Activated B cell treated with CpG ODN at 0.5 μM for 24 hours (primary cell): ENCODE measurements at regions of chr20 and their contacts with region 1.

Region 1: GRCh38 chr20:561437-562231 is 18.0 kb upstream of the CSNK2A1 start:
- DNase-seq: no peak
- ATAC-seq: peak; percentile 72
- H3K4me3 Mint-ChIP-seq: no peak overlapping the region
- H3K27ac Mint-ChIP-seq: no peak overlapping the region
- H3K4me1 Mint-ChIP-seq: no peaks in the 10 kb centered on the region
- H3K27me3 Mint-ChIP-seq: peaks cover 17% of the 10 kb centered on the region
- CTCF ChIP-seq: no peak

Region 2: DNA sequence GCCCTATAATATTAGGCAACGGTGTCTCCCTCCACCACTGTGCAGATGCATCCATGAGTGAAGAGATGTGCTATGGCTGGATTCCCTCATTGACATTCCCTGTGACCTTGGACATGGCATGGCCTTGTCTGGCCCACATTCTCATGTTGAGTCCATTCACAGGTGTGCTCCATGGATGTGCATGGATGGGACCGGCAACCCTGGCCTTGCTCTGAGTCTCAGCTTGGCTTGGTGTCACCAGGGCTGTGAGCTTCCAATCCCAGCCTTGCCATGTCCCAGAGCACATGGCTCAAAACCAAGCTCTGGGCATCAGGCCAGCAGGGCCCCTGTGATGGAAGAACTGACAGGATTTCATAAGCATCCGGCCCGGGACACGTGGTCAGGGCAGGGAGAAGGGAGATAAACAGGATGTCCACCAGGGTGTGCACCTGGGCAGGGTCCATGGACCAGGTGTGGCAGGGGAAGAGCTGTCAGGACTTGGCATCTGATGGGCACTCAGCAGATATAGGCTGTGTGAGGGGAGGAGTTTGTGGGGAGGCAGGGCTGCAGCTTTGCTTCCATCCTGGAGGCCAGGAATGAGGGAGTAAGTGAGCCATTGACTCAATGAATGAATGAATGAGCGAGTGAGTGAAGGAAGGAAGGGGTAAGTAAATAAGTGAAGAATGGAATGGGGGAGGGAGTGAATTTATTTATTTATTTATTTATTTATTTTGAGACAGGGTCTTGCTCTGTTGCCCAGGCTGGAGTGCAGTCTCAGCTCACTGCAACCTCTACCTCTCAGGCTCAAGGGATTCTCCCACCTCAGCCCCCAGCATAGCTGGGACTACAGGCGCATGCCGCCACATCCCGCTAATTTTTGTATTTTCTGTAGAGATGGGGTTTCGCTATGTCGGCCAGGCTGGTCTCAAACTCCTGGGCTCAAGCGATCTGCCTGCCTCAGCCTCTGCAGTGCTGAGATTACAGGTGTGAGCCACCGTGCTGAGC is 199.1 kb before region 1 on chr20:
- CTCF ChIA-PET with region 1: no interaction called
- POLR2A ChIA-PET with region 1: no interaction called
- intact Hi-C with region 1: no loop called
- DNase-seq: no peak
- ATAC-seq: peak; percentile 26
- H3K4me3 Mint-ChIP-seq: no peak overlapping the region
- H3K27ac Mint-ChIP-seq: peak overlapping the region; percentile 0
- H3K4me1 Mint-ChIP-seq: peaks cover 33% of the 10 kb centered on the region
- H3K27me3 Mint-ChIP-seq: no peaks in the 10 kb centered on the region
- CTCF ChIP-seq: no peak

Region 3: GRCh38 chr20:391041-391711 is 170.5 kb before region 1 on chr20:
- CTCF ChIA-PET with region 1: no interaction called
- POLR2A ChIA-PET with region 1: no interaction called
- intact Hi-C with region 1: no loop called
- DNase-seq: no peak
- ATAC-seq: no peak
- H3K4me3 Mint-ChIP-seq: no peak overlapping the region
- H3K27ac Mint-ChIP-seq: no peak overlapping the region
- H3K4me1 Mint-ChIP-seq: no peaks in the 10 kb centered on the region
- H3K27me3 Mint-ChIP-seq: no peaks in the 10 kb centered on the region
- CTCF ChIP-seq: no peak

Region 4: DNA sequence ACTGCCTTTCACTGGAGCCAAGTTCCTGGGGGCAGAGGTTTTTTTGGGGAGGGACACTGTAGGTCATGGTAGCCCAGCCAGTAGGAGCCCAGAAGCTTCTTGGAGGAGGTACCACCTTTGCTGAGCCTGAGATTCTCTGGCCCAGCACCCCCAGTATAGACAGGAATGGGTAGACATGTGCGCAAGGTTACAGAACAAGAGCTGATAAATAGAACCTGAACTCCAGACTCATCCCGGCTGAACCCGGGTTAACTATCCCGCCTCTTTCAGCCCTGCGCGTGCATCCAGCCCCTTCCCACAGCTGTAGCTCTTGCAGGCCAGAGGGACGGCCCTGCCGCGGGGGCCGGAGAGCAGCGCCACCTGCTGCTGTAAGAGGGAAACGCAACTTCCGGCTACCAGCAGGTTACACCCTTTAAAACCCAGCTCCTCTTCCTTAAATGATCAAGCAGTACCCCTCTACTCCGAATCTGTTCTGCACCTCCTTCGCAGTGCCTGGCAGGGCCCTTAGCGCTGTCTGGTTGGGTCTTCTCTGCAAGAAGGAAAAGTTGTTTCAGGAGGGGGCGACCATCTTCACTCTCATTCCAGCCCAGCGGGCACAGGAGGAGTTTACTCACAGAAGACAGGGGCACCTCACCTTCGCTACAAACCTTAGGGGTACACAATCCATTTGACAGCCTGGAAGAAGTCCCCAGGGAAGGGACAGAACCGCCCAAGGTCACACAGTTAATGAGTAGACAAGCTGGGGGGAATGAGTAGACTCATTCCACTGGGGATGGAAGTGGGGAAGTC is 83.9 kb after region 1 on chr20:
- CTCF ChIA-PET with region 1: interaction called, 8 read pairs
- POLR2A ChIA-PET with region 1: no interaction called
- intact Hi-C with region 1: loop called (anchors 1 kb)
- DNase-seq: peak; percentile 70
- ATAC-seq: peak; percentile 90
- H3K4me3 Mint-ChIP-seq: no peak overlapping the region
- H3K27ac Mint-ChIP-seq: no peak overlapping the region
- H3K4me1 Mint-ChIP-seq: peaks cover 10% of the 10 kb centered on the region
- H3K27me3 Mint-ChIP-seq: peaks cover 19% of the 10 kb centered on the region
- CTCF ChIP-seq: peak; percentile 81

Region 5: GRCh38 chr20:667391-667964 is 105.8 kb after region 1 on chr20:
- CTCF ChIA-PET with region 1: interaction called, 5 read pairs
- POLR2A ChIA-PET with region 1: no interaction called
- intact Hi-C with region 1: loop called (anchors 5 kb)
- DNase-seq: no peak
- ATAC-seq: no peak
- H3K4me3 Mint-ChIP-seq: no peak overlapping the region
- H3K27ac Mint-ChIP-seq: no peak overlapping the region
- H3K4me1 Mint-ChIP-seq: no peaks in the 10 kb centered on the region
- H3K27me3 Mint-ChIP-seq: peaks cover 56% of the 10 kb centered on the region
- CTCF ChIP-seq: no peak

Region 6: GRCh38 chr20:739736-740135 is 178.1 kb after region 1 on chr20:
- CTCF ChIA-PET with region 1: interaction called, 12 read pairs
- POLR2A ChIA-PET with region 1: no interaction called
- intact Hi-C with region 1: loop called (anchors 1 kb)
- DNase-seq: no peak
- ATAC-seq: no peak
- H3K4me3 Mint-ChIP-seq: no peak overlapping the region
- H3K27ac Mint-ChIP-seq: no peak overlapping the region
- H3K4me1 Mint-ChIP-seq: no peaks in the 10 kb centered on the region
- H3K27me3 Mint-ChIP-seq: peaks cover 12% of the 10 kb centered on the region
- CTCF ChIP-seq: no peak